ENCODE measurements at regions of chr13 and their contacts with region 1.

Region 1: DNA sequence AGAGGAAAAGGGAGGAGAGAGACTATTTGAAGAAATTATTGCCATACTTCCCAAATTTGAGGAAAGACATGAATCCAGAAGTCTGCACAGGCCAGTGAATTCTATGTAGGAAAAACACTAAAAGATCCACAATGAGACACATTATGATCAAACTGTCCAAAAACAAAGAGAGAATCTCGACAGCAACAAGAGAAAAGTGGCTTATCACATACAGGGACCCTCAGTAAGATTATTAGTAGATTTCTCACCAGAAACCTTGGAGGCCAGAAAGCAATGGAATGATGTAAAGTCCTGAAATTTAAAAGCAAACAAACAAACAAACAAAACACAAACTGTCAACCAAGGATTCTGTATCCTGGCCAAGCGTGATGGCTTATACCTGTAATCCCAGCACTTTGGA is 55.7 kb upstream of the IL17D start:
- DNase-seq: no peak
- H3K27ac ChIP-seq: no peak overlapping the region
- CTCF ChIP-seq: no peak

Region 2: GRCh38 chr13:20209948-20210347 is 437.8 kb before region 1 on chr13:
- CTCF ChIA-PET with region 1: interaction called, 10 read pairs
- POLR2A ChIA-PET with region 1: no interaction called
- DNase-seq: no peak
- H3K27ac ChIP-seq: no peak overlapping the region
- CTCF ChIP-seq: no peak